Activated T-helper 1 cell treated with anti-CD3 and anti-CD28 coated beads, Interleukin-12 subunit alpha, Interleukin-12 subunit beta, Interleukin-2, Interleukin-4 antibody, amounts not matched to agents 30 ng/mL and 10 ng/mL and 1 ng/mL, durations not matched to agents 14 hours and 24 hours and 36 hours (primary cell): ENCODE measurements at regions of chr15 and their contacts with region 1.

Region 1: DNA sequence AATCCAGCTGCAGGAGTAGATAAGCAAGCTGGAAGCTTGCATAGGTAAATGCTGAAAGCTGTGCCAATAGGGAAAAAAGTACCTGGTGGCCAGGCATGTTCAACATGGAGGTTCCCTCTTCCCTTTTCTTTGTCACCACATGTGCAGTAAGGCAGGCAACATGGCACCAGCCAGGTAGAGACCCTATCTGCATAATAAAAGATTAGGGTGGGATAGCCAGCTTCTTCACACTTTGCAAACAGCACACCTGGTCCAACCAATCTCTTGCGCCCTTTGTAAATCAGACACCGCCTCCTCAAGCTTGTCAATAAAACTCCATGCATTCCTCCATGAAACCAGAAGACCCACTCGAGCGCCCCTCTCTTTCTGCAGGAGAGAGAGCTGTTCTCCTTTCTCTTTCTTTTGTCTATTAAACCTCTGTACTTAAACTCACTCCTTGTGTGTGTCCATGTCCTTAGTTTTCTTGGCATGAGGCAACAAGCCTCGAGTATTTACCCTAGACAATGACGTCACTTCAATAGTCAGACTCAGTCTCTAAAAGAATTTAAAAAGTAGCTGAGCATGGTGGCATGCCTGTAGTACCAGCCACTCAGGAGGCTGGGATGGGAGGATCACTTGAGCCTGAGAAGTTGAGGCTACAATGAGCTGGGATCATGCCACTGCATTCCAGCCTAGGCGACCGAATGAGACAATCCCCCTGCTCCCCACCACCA is 256.3 kb downstream of the SCAPER start:
- DNase-seq: no peak
- H3K4me3 Mint-ChIP-seq: no peak overlapping the region
- H3K27ac Mint-ChIP-seq: no peak overlapping the region
- H3K4me1 Mint-ChIP-seq: peaks cover 5% of the 10 kb centered on the region
- H3K27me3 Mint-ChIP-seq: no peaks in the 10 kb centered on the region

Region 2: GRCh38 chr15:76514292-76514691 is 134.6 kb before region 1 on chr15:
- intact Hi-C with region 1: no loop called
- DNase-seq: no peak
- H3K4me3 Mint-ChIP-seq: no peak overlapping the region
- H3K27ac Mint-ChIP-seq: no peak overlapping the region
- H3K4me1 Mint-ChIP-seq: no peaks in the 10 kb centered on the region
- H3K27me3 Mint-ChIP-seq: no peaks in the 10 kb centered on the region

Region 3: DNA sequence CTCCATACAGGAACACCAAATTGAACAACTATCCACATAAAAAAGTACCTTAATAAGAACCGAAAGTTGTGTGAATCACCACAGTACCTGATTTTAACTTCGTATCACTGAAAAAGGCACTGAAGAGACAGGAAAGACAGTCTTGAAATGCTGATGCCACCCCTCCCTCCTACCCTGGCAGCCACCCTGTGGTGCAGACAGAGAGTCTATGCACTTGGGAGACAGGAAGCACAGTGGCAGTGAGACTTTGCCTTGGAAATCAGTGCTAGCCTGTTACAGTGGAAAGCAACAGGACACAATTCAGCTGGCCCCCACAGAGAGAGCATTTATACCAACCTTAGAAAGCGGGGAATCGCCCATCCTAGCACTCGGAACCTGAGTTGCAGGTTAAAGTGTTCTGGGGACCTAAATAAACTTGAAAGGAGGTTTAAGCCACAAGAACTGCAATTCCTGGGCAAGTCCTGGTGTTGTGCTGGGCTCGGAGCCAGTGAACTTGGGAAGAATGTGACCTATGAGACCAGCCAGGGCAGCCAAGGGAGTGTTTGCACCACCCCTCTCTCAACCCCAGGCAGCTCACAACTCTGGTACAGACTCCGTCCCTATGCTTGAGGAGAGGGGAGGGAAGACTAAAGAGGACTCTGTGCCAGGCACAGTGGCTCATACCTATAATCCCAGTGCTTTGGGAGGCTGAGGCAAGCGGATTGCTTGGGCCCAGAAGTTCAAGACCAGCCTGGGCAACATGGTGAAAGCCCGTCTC is 72.2 kb before region 1 on chr15:
- intact Hi-C with region 1: loop called (anchors 1 kb)
- DNase-seq: no peak
- H3K4me3 Mint-ChIP-seq: no peak overlapping the region
- H3K27ac Mint-ChIP-seq: no peak overlapping the region
- H3K4me1 Mint-ChIP-seq: peaks cover 22% of the 10 kb centered on the region
- H3K27me3 Mint-ChIP-seq: no peaks in the 10 kb centered on the region

Region 4: DNA sequence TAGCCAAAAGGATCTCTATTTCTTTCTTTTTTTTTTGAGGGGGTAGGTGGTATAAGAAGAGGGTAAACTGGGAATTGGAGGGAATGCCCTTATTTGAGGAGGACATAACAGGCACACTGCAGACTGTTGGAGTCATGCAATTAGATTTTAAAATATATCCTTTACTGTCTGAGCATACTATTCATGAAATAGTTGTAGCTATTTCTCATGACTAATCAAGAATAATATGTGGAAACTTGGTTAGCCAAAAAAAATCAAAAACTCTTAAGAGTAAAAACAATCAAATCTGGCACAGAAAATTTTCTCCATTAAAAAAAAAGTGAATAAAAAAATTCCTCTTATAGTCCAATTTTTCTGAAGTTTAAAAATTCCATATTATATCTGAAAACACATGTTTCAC is 81.4 kb after region 1 on chr15:
- intact Hi-C with region 1: no loop called
- DNase-seq: no peak
- H3K4me3 Mint-ChIP-seq: no peak overlapping the region
- H3K27ac Mint-ChIP-seq: no peak overlapping the region
- H3K4me1 Mint-ChIP-seq: no peaks in the 10 kb centered on the region
- H3K27me3 Mint-ChIP-seq: no peaks in the 10 kb centered on the region